ENCODE measurements at regions of chr15 and their contacts with region 1.

Region 1: GRCh38 chr15:73704869-73705645 is 20.9 kb downstream of the CD276 start:
- DNase-seq: peak; percentile 53 to 56
- ATAC-seq: peak; percentile 71 to 89
- H3K4me3 ChIP-seq: no peak overlapping the region
- H3K27ac ChIP-seq: no peak overlapping the region
- H3K4me1 ChIP-seq: no peaks in the 10 kb centered on the region
- CTCF ChIP-seq: peak; percentile 64
- EP300 ChIP-seq: no peak
- POLR2A ChIP-seq: no peak
- RAD21 ChIP-seq: peak; percentile 52 to 60

Region 2: DNA sequence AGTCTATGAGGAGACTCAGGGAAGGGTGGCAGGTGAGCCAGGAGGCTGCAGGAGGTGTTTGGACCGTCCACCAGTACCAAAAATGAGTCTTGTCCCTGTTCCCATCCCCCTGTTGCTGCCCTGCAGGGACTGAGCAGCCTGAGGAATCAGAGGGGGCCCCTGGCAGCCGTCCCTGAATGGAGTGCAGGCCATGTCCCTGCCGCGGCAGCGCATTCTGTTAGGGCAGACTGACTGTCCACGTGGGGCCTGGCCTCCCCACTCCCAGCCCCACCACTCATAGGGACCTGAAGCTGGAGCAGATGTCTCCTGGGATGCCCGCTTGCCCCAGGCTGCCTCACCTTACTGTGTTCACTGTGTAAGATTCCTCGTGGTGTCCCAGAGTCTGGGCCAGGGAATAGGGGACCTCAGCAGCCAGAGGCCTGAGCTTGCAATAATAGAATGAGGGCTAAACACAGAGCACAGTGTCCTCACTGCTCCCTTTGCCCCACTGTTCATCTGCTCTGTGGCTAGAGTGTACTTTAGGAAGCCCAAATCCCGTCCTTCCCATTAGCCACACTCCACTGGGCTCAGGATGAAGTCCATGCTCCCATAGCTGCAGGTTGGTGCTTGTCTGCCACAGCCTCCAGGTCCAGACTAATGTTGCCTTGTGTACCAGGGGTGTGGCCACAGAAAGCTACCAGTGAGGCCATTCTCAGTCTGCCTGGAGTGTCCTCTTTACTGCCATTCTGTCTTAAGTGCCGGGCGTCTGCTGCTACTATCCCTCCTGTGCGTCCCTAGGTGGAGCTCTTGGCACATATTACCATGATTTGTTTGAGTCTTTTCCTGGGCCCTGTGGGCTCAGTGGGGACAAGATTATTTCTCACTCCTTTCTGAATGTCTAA is 399.5 kb before region 1 on chr15:
- CTCF ChIA-PET with region 1: interaction called, 53 read pairs
- POLR2A ChIA-PET with region 1: no interaction called
- DNase-seq: peak; percentile 81 to 86
- ATAC-seq: peak; percentile 91 to 95
- H3K4me3 ChIP-seq: no peak overlapping the region
- H3K27ac ChIP-seq: no peak overlapping the region
- H3K4me1 ChIP-seq: no peaks in the 10 kb centered on the region
- CTCF ChIP-seq: peak; percentile 83
- EP300 ChIP-seq: no peak
- POLR2A ChIP-seq: no peak
- RAD21 ChIP-seq: peak; percentile 89 to 95

Region 3: GRCh38 chr15:73560501-73561117 is 144.4 kb before region 1 on chr15:
- CTCF ChIA-PET with region 1: interaction called, 38 read pairs
- POLR2A ChIA-PET with region 1: interaction called, 3 read pairs
- DNase-seq: peak; percentile 30 to 80
- ATAC-seq: peak; percentile 74 to 88; a peak in 5 of 6 replicates
- H3K4me3 ChIP-seq: no peak overlapping the region
- H3K27ac ChIP-seq: no peak overlapping the region
- H3K4me1 ChIP-seq: 0 out of 3 replicates have a peak, but pooled peaks cover 6% of the 10 kb centered on the region
- CTCF ChIP-seq: peak; percentile 87
- EP300 ChIP-seq: no peak
- POLR2A ChIP-seq: no peak
- RAD21 ChIP-seq: peak; percentile 83 to 88

Region 4: GRCh38 chr15:73677146-73677607 is 27.9 kb before region 1 on chr15:
- CTCF ChIA-PET with region 1: interaction called, 82 read pairs
- POLR2A ChIA-PET with region 1: no interaction called
- DNase-seq: peak; percentile 36 to 61
- ATAC-seq: peak; percentile 80 to 94; a peak in 4 of 6 replicates
- H3K4me3 ChIP-seq: no peak overlapping the region
- H3K27ac ChIP-seq: no peak overlapping the region
- H3K4me1 ChIP-seq: no peaks in the 10 kb centered on the region
- CTCF ChIP-seq: peak; percentile 47
- EP300 ChIP-seq: no peak
- POLR2A ChIP-seq: no peak
- RAD21 ChIP-seq: peak; percentile 36 to 52; a peak in 4 of 5 replicates

Region 5: GRCh38 chr15:73717802-73718201 is 12.7 kb after region 1 on chr15:
- CTCF ChIA-PET with region 1: interaction called, 21 read pairs
- POLR2A ChIA-PET with region 1: no interaction called
- DNase-seq: no peak
- ATAC-seq: 0 out of 6 replicates have a peak, but pooled peaks of 1 of the 2 experiments have one; percentile 22
- H3K4me3 ChIP-seq: no peak overlapping the region
- H3K27ac ChIP-seq: no peak overlapping the region
- H3K4me1 ChIP-seq: no peaks in the 10 kb centered on the region
- CTCF ChIP-seq: no peak
- EP300 ChIP-seq: no peak
- POLR2A ChIP-seq: no peak
- RAD21 ChIP-seq: no peak

Region 6: GRCh38 chr15:73727330-73727976 is 22.4 kb after region 1 on chr15:
- CTCF ChIA-PET with region 1: interaction called, 18 read pairs
- POLR2A ChIA-PET with region 1: no interaction called
- DNase-seq: peak; percentile 11 to 58
- ATAC-seq: peak; percentile 72 to 89
- H3K4me3 ChIP-seq: no peak overlapping the region
- H3K27ac ChIP-seq: no peak overlapping the region; a peak in 1 of 6 replicates
- H3K4me1 ChIP-seq: no peaks in the 10 kb centered on the region; the same call in 2 of the 3 replicates
- CTCF ChIP-seq: no peak
- EP300 ChIP-seq: no peak
- POLR2A ChIP-seq: no peak
- RAD21 ChIP-seq: no peak

Region 7: DNA sequence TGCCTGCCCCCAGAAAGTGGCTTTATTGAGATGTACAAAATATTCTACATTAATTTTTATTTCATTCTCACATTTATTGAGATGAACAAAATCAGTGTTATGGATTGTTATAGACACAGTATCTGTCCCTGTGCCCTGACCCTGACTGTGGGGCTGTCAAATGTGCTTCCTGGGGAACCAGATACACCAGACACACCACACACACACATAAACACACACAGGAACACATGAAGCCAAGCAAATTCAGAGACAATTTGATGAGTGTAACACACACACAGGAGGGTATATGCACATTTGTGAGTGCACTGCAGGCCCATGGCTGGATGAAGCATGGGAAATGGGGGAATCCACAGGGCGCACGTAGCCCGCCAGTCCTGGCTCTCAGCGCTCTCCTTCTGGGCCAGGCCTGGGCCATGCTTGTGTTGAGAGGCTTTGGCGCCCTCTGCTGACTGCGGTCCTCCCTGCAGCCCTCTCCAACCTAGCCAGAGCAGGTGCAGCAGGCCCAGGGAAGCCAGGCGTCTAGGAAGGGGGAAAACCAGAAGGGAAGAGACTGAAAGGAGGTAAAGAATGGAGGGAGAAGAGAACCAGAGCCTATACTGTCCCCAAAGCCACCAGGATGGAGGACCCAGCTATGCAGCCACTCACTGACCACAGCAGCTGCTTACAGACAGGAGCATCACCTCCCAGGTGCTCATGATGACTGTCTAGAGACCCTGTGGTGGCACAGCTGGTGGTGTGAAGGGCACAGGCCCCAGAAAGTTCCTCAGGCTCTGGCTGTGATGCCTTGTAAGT is 203.2 kb after region 1 on chr15:
- CTCF ChIA-PET with region 1: interaction called, 23 read pairs
- POLR2A ChIA-PET with region 1: no interaction called
- DNase-seq: peak; percentile 52 to 54
- ATAC-seq: peak; percentile 98 to 100
- H3K4me3 ChIP-seq: no peak overlapping the region
- H3K27ac ChIP-seq: no peak overlapping the region
- H3K4me1 ChIP-seq: no peaks in the 10 kb centered on the region
- CTCF ChIP-seq: peak; percentile 63
- EP300 ChIP-seq: no peak
- POLR2A ChIP-seq: no peak
- RAD21 ChIP-seq: peak; percentile 76 to 78